SK-N-SH (cell line): ENCODE measurements at regions of chr19 and their contacts with region 1.

Region 1: DNA sequence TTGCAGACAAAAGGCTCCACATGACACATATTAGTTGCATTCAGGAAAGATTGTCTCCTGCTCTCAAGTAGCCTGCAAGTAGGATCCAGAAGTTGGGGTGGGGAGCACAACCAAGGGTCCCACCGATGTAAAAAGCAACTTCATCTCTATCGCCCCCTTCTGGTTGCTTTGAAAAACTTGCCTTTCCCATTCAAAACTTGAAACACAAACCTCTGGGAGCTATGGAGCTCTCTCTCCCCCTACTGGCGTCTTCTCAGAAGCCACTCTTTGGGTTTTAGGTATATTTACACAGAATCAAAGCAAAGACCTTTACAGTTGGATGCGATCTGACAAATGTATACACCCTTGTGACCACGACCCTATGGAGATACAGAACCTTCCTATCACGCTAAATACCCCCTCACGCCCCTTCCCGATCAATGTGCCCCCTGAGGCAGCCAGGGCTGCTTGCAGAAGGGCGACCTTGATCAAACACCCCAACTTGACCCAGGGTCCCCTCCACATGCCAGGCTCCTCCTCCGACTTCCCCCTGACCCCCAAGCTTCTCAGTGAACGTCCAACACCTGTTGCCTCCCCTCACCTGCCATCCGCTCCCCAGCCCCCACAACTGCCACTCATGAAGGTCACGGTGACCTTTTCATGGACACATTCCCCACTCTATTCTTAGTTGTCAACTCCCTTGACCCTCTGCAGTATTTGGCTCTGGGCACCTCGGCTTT is 10.1 kb downstream of the NOSIP start:
- DNase-seq: peak; percentile 86
- H3K4me3 ChIP-seq: peak overlapping the region in 1 of 2 experiments; percentile 31; a peak in 1 of 4 replicates
- H3K27ac ChIP-seq: no peak overlapping the region; a peak in 1 of 4 replicates
- H3K4me1 ChIP-seq: peaks cover 7 to 12% of the 10 kb centered on the region in 2 experiments; a peak in 2 of 4 replicates
- H3K27me3 ChIP-seq: no peaks in the 10 kb centered on the region
- CTCF ChIP-seq: peak; percentile 99
- EP300 ChIP-seq: no peak
- RAD21 ChIP-seq: peak; percentile 87

Region 2: GRCh38 chr19:48010932-48011764 is 1559.1 kb before region 1 on chr19:
- CTCF ChIA-PET with region 1: no interaction called
- POLR2A ChIA-PET with region 1: no interaction called
- DNase-seq: no peak
- H3K4me3 ChIP-seq: no peak overlapping the region
- H3K27ac ChIP-seq: no peak overlapping the region
- H3K4me1 ChIP-seq: no peaks in the 10 kb centered on the region
- H3K27me3 ChIP-seq: peaks cover 13% of the 10 kb centered on the region; the same call in 1 of the 2 replicates
- CTCF ChIP-seq: no peak
- EP300 ChIP-seq: no peak
- RAD21 ChIP-seq: no peak

Region 3: DNA sequence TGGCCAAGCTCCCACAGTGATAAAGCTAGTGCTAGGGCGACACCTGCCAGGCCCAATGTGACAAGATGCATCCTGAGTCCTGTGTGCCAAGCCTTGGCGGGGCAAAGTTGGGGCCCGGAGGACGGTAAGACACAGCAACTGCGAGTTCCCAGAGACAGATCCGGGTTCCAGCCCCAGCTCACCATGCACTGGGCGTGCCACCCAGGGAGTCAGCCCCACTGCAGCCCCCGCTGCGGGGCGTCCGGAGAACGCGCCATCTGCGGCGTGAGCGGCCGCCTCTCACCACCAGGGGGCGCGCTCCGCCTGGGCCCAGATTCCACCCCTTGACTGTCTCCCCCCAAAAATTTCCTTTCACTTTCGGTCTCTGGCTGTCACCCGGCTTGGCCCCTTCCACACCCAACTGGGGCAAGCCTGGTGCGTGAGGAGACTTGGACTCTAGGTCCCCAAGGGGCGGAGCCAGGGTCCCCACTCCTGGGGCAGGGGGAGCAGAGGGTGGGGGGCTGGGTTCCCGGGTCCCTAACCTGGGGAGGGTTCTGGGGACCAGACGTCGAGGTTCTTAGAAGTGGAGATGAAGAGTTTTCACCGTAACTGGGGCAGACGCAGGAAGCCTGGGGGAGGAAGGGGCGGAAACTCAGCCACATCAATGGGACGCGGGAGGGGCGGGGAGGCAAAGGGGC is 96.3 kb before region 1 on chr19 and contains the start of gene FLT3LG:
- CTCF ChIA-PET with region 1: interaction called, 11 read pairs
- POLR2A ChIA-PET with region 1: no interaction called
- DNase-seq: peak; percentile 96
- H3K4me3 ChIP-seq: peak within 1 kb of the TSS; percentile 46 to 84
- H3K27ac ChIP-seq: 0 out of 4 replicates have a peak within 1 kb of the TSS, but pooled peaks of 1 of the 2 experiments have one; percentile 28
- H3K4me1 ChIP-seq: peaks cover 0 to 5% of the 10 kb centered on the region in 2 experiments; a peak in 2 of 4 replicates
- H3K27me3 ChIP-seq: no peaks in the 10 kb centered on the region
- CTCF ChIP-seq: peak; percentile 97
- EP300 ChIP-seq: no peak
- RAD21 ChIP-seq: peak; percentile 55
- polyA plus RNA-seq, gene FLT3LG: 4.0 and 6.4 TPM in 2 replicates

Region 4: GRCh38 chr19:49497047-49497788 is 73.1 kb before region 1 on chr19:
- CTCF ChIA-PET with region 1: interaction called, 28 read pairs
- POLR2A ChIA-PET with region 1: interaction called, 3 read pairs
- DNase-seq: peak; percentile 68
- H3K4me3 ChIP-seq: peak overlapping the region; percentile 88 to 97
- H3K27ac ChIP-seq: peak overlapping the region; percentile 90 to 91; a peak in 3 of 4 replicates
- H3K4me1 ChIP-seq: peaks cover 11 to 24% of the 10 kb centered on the region in 2 experiments
- H3K27me3 ChIP-seq: no peaks in the 10 kb centered on the region
- CTCF ChIP-seq: no peak
- EP300 ChIP-seq: no peak
- RAD21 ChIP-seq: no peak

Region 5: DNA sequence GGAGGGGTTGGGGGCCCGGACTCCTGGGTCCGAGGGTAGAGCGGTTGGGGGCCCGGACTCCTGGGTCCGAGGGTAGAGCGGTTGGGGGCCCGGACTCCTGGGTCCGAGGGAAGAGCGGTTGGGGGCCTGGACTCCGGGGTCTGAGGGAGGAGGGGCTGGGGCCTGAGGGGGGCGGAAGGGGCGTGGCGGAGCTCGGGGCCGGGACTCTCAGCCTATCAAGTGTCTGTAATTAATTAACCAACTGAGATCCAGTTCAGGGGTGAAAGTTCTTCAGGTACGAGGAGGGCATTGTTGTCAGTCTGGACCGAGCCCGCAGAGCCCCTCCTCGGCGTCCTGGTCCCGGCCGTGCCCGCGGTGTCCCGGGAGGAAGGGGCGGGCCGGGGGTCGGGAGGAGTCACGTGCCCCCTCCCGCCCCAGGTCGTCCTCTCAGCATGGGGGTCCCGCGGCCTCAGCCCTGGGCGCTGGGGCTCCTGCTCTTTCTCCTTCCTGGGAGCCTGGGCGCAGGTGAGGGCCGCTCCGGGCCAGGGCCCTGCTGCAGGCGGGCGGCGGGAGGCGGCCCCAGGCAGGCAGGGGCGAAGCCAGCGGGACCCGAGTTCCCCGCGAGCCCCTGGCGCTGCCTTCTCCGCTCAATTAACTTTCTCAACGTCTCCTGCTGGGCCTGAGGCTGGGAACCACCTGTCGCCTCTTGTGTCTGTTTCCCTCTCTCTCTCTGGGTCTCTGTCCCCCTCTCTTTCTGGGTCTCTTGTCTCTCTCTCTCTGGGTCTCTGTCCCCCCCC is 57.1 kb before region 1 on chr19:
- CTCF ChIA-PET with region 1: interaction called, 16 read pairs
- POLR2A ChIA-PET with region 1: no interaction called
- DNase-seq: peak; percentile 88
- H3K4me3 ChIP-seq: peak overlapping the region; percentile 60 to 78
- H3K27ac ChIP-seq: peak overlapping the region in 1 of 2 experiments; percentile 71; a peak in 1 of 4 replicates
- H3K4me1 ChIP-seq: peaks cover 0 to 9% of the 10 kb centered on the region in 2 experiments; a peak in 1 of 4 replicates
- H3K27me3 ChIP-seq: no peaks in the 10 kb centered on the region
- CTCF ChIP-seq: no peak
- EP300 ChIP-seq: no peak
- RAD21 ChIP-seq: no peak

Region 6: GRCh38 chr19:49555600-49556411 is 14.5 kb before region 1 on chr19:
- CTCF ChIA-PET with region 1: interaction called, 87 read pairs
- POLR2A ChIA-PET with region 1: no interaction called
- DNase-seq: peak; percentile 95
- H3K4me3 ChIP-seq: no peak overlapping the region
- H3K27ac ChIP-seq: no peak overlapping the region
- H3K4me1 ChIP-seq: no peaks in the 10 kb centered on the region; a peak in 1 of 4 replicates
- H3K27me3 ChIP-seq: no peaks in the 10 kb centered on the region
- CTCF ChIP-seq: no peak
- EP300 ChIP-seq: no peak
- RAD21 ChIP-seq: no peak

Region 7: GRCh38 chr19:49676690-49677231 is 106.5 kb after region 1 on chr19:
- CTCF ChIA-PET with region 1: interaction called, 20 read pairs
- POLR2A ChIA-PET with region 1: no interaction called
- DNase-seq: peak; percentile 93
- H3K4me3 ChIP-seq: peak overlapping the region; percentile 90 to 98
- H3K27ac ChIP-seq: peak overlapping the region; percentile 89 to 95
- H3K4me1 ChIP-seq: peaks cover 24 to 29% of the 10 kb centered on the region in 2 experiments; a peak in 3 of 4 replicates
- H3K27me3 ChIP-seq: no peaks in the 10 kb centered on the region
- CTCF ChIP-seq: no peak
- EP300 ChIP-seq: no peak
- RAD21 ChIP-seq: no peak